HepG2 (cell line): ENCODE measurements at regions of chr15 and their contacts with region 1.

Region 1: DNA sequence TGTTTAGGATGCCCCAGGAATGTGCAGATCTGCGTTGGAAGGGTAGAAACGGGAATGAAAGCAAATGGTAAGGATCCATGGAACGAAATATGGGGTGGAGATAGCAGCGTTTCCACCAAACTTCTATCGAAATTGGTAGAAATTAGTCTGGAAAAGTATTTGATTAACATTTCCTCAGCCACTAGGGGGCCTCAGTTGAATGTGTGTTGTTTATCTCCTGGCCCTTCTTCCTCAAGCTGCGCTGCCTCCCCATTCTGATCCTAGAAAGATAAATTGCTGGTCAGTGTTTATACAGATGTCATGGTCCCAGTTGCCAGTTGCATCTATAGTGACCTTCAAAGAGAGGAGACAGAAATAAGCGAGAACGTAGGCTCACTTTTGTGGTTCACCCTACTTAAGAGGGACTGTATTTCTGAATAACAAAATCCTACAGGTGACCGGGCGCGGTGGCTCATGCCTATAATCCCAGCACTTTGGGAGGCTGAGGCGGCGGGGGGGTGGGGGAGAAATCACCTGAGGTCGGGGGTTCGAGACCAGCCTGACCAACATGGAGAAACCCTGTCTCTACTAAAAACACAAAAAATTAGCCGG is 457.1 kb downstream of the SQOR start:
- DNase-seq: peak; percentile 12
- ATAC-seq: no peak
- H3K4me3 ChIP-seq: no peak overlapping the region
- H3K27ac ChIP-seq: no peak overlapping the region
- H3K4me1 ChIP-seq: no peaks in the 10 kb centered on the region
- H3K27me3 ChIP-seq: no peaks in the 10 kb centered on the region
- CTCF ChIP-seq: peak; percentile 51
- EP300 ChIP-seq: no peak
- POLR2A ChIP-seq: no peak
- RAD21 ChIP-seq: no peak

Region 2: GRCh38 chr15:45705510-45706473 is 386.2 kb before region 1 on chr15:
- CTCF ChIA-PET with region 1: no interaction called
- POLR2A ChIA-PET with region 1: no interaction called
- in situ Hi-C with region 1: loop called (anchors 25 kb)
- intact Hi-C with region 1: no loop called
- DNase-seq: peak; percentile 68
- ATAC-seq: peak; percentile 90
- H3K4me3 ChIP-seq: peak overlapping the region; percentile 57 to 70 (median 68)
- H3K27ac ChIP-seq: no peak overlapping the region
- H3K4me1 ChIP-seq: peaks cover 6% of the 10 kb centered on the region; the same call in 1 of the 2 replicates
- H3K27me3 ChIP-seq: no peaks in the 10 kb centered on the region
- CTCF ChIP-seq: peak; percentile 90
- EP300 ChIP-seq: no peak
- POLR2A ChIP-seq: no peak
- RAD21 ChIP-seq: peak; percentile 77

Region 3: GRCh38 chr15:46127361-46127874 is 35.5 kb after region 1 on chr15:
- CTCF ChIA-PET with region 1: no interaction called
- POLR2A ChIA-PET with region 1: no interaction called
- in situ Hi-C with region 1: no loop called
- intact Hi-C with region 1: loop called (anchors 2 kb)
- DNase-seq: no peak
- ATAC-seq: no peak
- H3K4me3 ChIP-seq: no peak overlapping the region
- H3K27ac ChIP-seq: no peak overlapping the region
- H3K4me1 ChIP-seq: no peaks in the 10 kb centered on the region
- H3K27me3 ChIP-seq: no peaks in the 10 kb centered on the region
- CTCF ChIP-seq: no peak
- EP300 ChIP-seq: no peak
- POLR2A ChIP-seq: no peak
- RAD21 ChIP-seq: no peak